ENCODE measurements at regions of chr7 and their contacts with region 1.

Region 1: GRCh38 chr7:98400542-98401340 is at the start of gene BAIAP2L1:
- DNase-seq: peak; percentile 87
- ATAC-seq: peak; percentile 95
- H3K4me3 ChIP-seq: peak within 1 kb of the TSS in 3 of 5 experiments; percentile 42 to 53 (median 53)
- H3K4me3 Mint-ChIP-seq: peak within 1 kb of the TSS; percentile 73
- H3K27ac ChIP-seq: no peak within 1 kb of the TSS
- H3K27ac Mint-ChIP-seq: peak within 1 kb of the TSS; percentile 15
- H3K4me1 ChIP-seq: peaks cover 7 to 14% of the 10 kb centered on the region in 2 donors
- H3K4me1 Mint-ChIP-seq: peaks cover 20% of the 10 kb centered on the region
- H3K27me3 ChIP-seq: peaks cover 0 to 23% (median 12%) of the 10 kb centered on the region in 4 experiments
- H3K27me3 Mint-ChIP-seq: peaks cover 32% of the 10 kb centered on the region
- CTCF ChIP-seq: no peak
- total RNA-seq, gene BAIAP2L1: 2.7 and 3.7 TPM in 2 replicates

Region 2: DNA sequence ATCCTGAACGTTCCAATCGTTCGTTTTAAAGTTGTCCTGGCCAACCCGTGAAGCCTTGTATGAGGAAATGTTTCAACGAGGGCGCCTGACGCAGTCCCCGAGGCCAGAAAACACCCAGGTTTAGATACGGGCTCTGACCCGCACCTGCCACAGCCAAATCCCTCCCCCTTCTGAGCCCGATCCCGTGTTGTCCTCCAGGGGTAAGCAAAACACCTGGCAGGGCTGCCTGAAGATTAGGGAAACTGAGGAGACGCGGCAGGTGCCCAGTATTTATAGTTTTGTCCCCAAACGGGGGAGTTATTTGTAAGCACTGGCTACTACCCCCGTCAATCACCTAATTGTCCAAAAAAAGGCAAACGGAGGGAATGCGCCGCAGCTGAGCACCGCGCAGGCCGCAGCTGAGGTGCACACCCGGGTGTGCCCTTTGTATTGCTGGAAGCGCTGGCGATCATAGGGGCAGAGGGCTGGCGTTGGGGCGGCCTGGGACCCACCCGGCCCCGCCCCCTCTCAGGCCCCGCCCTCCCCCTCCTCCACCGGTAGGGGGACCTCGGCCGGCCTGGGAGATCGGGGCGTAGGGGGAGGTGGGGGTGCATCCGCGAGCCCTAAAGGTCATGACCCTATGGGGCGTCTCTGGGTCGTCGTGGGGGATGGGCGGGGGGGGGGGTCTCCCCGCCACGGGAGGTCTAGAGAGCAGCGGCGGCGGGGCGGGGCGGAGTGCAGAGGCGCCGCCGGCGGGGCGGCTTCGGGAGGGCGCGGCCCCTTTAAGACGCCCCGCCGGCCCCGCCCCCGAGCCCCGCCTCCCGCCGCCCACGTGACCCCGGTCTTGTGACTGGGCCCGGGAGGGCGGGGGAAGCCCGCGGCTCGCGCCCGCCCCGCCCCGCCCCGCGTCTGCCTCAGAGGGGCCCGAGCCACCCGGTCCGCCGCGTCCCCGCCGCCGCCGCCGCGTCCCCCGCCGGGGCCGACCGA is 119.7 kb before region 1 on chr7 and contains the start of gene BRI3:
- CTCF ChIA-PET with region 1: no interaction called
- POLR2A ChIA-PET with region 1: no interaction called
- intact Hi-C with region 1: loop called (anchors 1 kb)
- DNase-seq: peak; percentile 91
- ATAC-seq: peak; percentile 84
- H3K4me3 ChIP-seq: peak within 1 kb of the TSS; percentile 69 to 92 (median 77)
- H3K4me3 Mint-ChIP-seq: peak within 1 kb of the TSS; percentile 89
- H3K27ac ChIP-seq: peak within 1 kb of the TSS; percentile 83
- H3K27ac Mint-ChIP-seq: peak within 1 kb of the TSS; percentile 91
- H3K4me1 ChIP-seq: peaks cover 21 to 40% of the 10 kb centered on the region in 2 donors
- H3K4me1 Mint-ChIP-seq: peaks cover 35% of the 10 kb centered on the region
- H3K27me3 ChIP-seq: no peaks in the 10 kb centered on the region
- H3K27me3 Mint-ChIP-seq: no peaks in the 10 kb centered on the region
- CTCF ChIP-seq: no peak
- total RNA-seq, gene BRI3: 78.8 and 86.7 TPM in 2 replicates

Region 3: DNA sequence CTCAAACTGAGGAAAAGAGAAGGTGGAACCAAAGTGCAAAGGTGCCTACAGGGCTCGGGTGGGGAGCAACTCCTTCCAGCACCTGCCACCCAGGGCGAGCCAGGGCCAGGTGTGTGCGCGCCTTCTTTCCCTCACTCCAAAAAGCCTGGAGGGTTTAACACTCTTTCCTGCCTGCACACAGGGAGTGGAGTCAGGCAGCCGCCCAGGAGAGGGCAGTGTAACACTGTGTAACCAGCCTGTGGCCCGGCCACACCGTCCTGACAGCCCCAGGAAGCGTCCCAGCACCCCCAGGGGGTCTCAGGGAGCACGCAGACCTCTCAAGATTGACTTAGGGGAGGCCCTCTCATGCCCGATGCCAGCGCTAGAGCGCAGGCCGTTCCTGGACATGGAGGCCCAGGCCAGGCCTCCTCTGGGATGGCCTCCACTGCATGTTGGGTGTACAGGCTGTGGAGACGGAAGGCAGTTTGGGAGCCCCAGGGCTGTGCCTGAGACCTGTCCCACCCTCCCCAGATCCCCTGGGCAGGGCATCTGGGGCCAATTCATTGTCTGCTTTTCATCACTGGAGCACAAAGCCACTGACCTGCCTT is 105.9 kb before region 1 on chr7:
- CTCF ChIA-PET with region 1: interaction called, 23 read pairs
- POLR2A ChIA-PET with region 1: no interaction called
- intact Hi-C with region 1: no loop called
- DNase-seq: peak; percentile 72
- ATAC-seq: peak; percentile 78
- H3K4me3 ChIP-seq: no peak overlapping the region
- H3K4me3 Mint-ChIP-seq: no peak overlapping the region
- H3K27ac ChIP-seq: no peak overlapping the region
- H3K27ac Mint-ChIP-seq: no peak overlapping the region
- H3K4me1 ChIP-seq: peaks cover 0 to 3% of the 10 kb centered on the region in 2 donors
- H3K4me1 Mint-ChIP-seq: no peaks in the 10 kb centered on the region
- H3K27me3 ChIP-seq: no peaks in the 10 kb centered on the region
- H3K27me3 Mint-ChIP-seq: no peaks in the 10 kb centered on the region
- CTCF ChIP-seq: peak; percentile 76

Region 4: GRCh38 chr7:98315341-98315983 is 85.3 kb before region 1 on chr7:
- CTCF ChIA-PET with region 1: interaction called, 7 read pairs
- POLR2A ChIA-PET with region 1: interaction called, 9 read pairs
- intact Hi-C with region 1: loop called (anchors 5 kb)
- DNase-seq: peak; percentile 79
- ATAC-seq: peak; percentile 57
- H3K4me3 ChIP-seq: peak overlapping the region in 1 of 5 experiments; percentile 23
- H3K4me3 Mint-ChIP-seq: peak overlapping the region; percentile 56
- H3K27ac ChIP-seq: peak overlapping the region; percentile 72 to 87
- H3K27ac Mint-ChIP-seq: no peak overlapping the region
- H3K4me1 ChIP-seq: peaks cover 26 to 41% of the 10 kb centered on the region in 2 donors
- H3K4me1 Mint-ChIP-seq: peaks cover 41% of the 10 kb centered on the region
- H3K27me3 ChIP-seq: peaks cover 0 to 28% (median 16%) of the 10 kb centered on the region in 4 experiments
- H3K27me3 Mint-ChIP-seq: peaks cover 24% of the 10 kb centered on the region
- CTCF ChIP-seq: no peak